MCF 10A (cell line): ENCODE measurements at regions of chr7 and their contacts with region 1.

Region 1: GRCh38 chr7:92833024-92833765 is 3.2 kb downstream of the CDK6 start:
- DNase-seq: peak; percentile 91
- H3K4me3 Mint-ChIP-seq: peak overlapping the region; percentile 83
- H3K27ac Mint-ChIP-seq: peak overlapping the region; percentile 74
- H3K4me1 Mint-ChIP-seq: peaks cover 36% of the 10 kb centered on the region
- H3K27me3 Mint-ChIP-seq: no peaks in the 10 kb centered on the region
- CTCF ChIP-seq: peak; percentile 91

Region 2: DNA sequence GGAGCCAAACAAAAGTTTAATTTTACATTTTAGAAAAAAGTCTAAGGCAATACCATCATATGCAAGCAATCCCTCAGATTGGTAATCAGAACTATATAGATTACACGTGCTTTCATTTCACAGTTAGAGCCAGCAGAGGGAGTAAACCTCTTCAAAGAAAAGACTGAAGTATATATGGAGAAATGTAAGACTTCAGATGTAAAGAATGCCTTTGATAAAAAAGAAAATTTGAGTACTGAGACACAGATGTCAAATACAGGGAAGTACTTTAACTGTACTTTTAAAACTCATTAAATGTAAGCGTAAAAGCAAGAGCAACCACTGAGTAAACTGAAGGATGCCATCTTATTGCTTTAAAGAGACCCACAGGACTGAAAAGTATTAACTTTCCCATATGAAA is 141.6 kb before region 1 on chr7:
- CTCF ChIA-PET with region 1: interaction called, 49 read pairs
- POLR2A ChIA-PET with region 1: interaction called, 89 read pairs
- intact Hi-C with region 1: loop called (anchors 1 kb)
- DNase-seq: peak; percentile 72
- H3K4me3 Mint-ChIP-seq: no peak overlapping the region
- H3K27ac Mint-ChIP-seq: no peak overlapping the region
- H3K4me1 Mint-ChIP-seq: peaks cover 22% of the 10 kb centered on the region
- H3K27me3 Mint-ChIP-seq: no peaks in the 10 kb centered on the region
- CTCF ChIP-seq: peak; percentile 56

Region 3: DNA sequence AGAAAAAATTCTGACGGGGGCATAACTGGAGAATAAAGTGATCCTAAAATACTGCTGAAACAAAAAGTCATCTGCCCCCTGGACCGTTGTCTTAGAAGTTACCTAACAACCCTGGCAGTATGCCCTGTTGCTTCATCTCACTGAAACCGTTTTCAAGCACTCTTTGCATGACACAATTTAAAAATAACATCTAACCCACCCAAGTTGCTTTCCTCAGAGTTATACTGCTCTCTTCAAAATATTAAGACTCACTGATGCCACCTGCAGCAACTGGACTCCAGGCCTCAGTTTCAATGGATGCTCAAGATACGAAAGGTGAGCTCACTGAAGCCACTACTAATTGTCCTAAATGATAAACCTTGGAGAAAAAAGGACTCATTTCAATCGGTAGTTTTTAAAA is 54.2 kb before region 1 on chr7:
- CTCF ChIA-PET with region 1: interaction called, 3 read pairs
- POLR2A ChIA-PET with region 1: no interaction called
- intact Hi-C with region 1: loop called (anchors 2 kb)
- DNase-seq: peak; percentile 93
- H3K4me3 Mint-ChIP-seq: no peak overlapping the region
- H3K27ac Mint-ChIP-seq: peak overlapping the region; percentile 22
- H3K4me1 Mint-ChIP-seq: peaks cover 30% of the 10 kb centered on the region
- H3K27me3 Mint-ChIP-seq: no peaks in the 10 kb centered on the region
- CTCF ChIP-seq: no peak

Region 4: GRCh38 chr7:92815412-92815811 is 17.8 kb before region 1 on chr7:
- CTCF ChIA-PET with region 1: interaction called, 16 read pairs
- POLR2A ChIA-PET with region 1: interaction called, 23 read pairs
- intact Hi-C with region 1: no loop called
- DNase-seq: no peak
- H3K4me3 Mint-ChIP-seq: no peak overlapping the region
- H3K27ac Mint-ChIP-seq: no peak overlapping the region
- H3K4me1 Mint-ChIP-seq: peaks cover 18% of the 10 kb centered on the region
- H3K27me3 Mint-ChIP-seq: no peaks in the 10 kb centered on the region
- CTCF ChIP-seq: no peak

Region 5: GRCh38 chr7:92916674-92917224 is 83.6 kb after region 1 on chr7:
- CTCF ChIA-PET with region 1: no interaction called
- POLR2A ChIA-PET with region 1: interaction called, 8 read pairs
- intact Hi-C with region 1: loop called (anchors 5 kb)
- DNase-seq: peak; percentile 55
- H3K4me3 Mint-ChIP-seq: no peak overlapping the region
- H3K27ac Mint-ChIP-seq: peak overlapping the region; percentile 53
- H3K4me1 Mint-ChIP-seq: peaks cover 13% of the 10 kb centered on the region
- H3K27me3 Mint-ChIP-seq: no peaks in the 10 kb centered on the region
- CTCF ChIP-seq: no peak

Region 6: GRCh38 chr7:93043385-93043985 is 210.3 kb after region 1 on chr7:
- CTCF ChIA-PET with region 1: interaction called, 3 read pairs
- POLR2A ChIA-PET with region 1: interaction called, 18 read pairs
- intact Hi-C with region 1: loop called (anchors 5 kb)
- DNase-seq: peak; percentile 80
- H3K4me3 Mint-ChIP-seq: peak overlapping the region; percentile 68
- H3K27ac Mint-ChIP-seq: peak overlapping the region; percentile 76
- H3K4me1 Mint-ChIP-seq: peaks cover 19% of the 10 kb centered on the region
- H3K27me3 Mint-ChIP-seq: no peaks in the 10 kb centered on the region
- CTCF ChIP-seq: no peak

Region 7: DNA sequence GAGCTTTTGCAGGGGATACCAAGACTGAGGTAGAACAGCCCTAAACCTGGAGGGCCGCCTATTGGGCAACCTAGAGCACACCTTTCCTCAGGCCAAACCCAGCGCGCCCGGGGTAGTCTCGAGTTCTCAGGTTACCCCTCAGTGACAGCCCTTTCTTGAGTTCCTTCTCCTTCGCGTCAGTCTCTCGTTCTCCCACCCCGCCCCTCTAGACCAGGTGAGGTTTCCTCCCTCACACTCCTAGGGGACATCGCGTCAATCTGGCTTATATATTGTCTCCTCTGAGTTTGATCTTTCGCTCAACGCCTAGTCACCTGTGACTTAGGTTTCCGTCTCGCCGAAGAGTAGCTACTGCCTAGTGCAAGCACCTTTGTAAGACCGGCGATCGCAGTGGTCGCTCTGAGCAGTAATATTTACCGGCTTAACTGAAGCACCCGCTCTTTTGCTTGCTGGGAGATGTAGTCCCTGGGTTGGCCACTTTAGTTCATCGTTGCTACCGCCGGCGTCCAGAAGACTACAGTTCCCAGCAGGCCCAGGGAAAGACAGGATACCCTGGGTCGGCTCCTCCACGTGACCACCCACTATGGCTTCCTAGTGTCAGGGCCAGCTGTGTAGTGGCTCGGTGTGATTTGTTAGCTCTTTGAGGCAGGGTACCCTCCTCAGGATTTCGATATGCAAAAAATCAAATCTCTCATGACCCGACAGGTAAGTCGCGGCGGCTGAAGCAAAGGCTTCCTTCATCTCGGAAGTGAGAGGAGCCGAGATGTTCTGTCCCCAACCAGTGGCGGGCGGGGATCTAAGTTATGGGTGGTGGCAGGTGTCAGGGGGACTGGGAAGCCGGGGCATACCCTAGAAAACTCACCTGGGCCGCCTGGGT is 398.8 kb after region 1 on chr7 and contains the start of gene VPS50:
- CTCF ChIA-PET with region 1: interaction called, 3 read pairs
- POLR2A ChIA-PET with region 1: interaction called, 5 read pairs
- intact Hi-C with region 1: loop called (anchors 10 kb)
- DNase-seq: peak; percentile 97
- H3K4me3 Mint-ChIP-seq: peak within 1 kb of the TSS; percentile 96
- H3K27ac Mint-ChIP-seq: peak within 1 kb of the TSS; percentile 73
- H3K4me1 Mint-ChIP-seq: no peaks in the 10 kb centered on the region
- H3K27me3 Mint-ChIP-seq: peaks cover 8% of the 10 kb centered on the region
- CTCF ChIP-seq: no peak
- total RNA-seq, gene VPS50: 15.2 and 22.4 TPM in 2 replicates